Activated CD8-positive, alpha-beta T cell treated with anti-CD3 and anti-CD28 coated beads for 36 hours (primary cell): ENCODE measurements at regions of chr2 and their contacts with region 1.

Region 1: DNA sequence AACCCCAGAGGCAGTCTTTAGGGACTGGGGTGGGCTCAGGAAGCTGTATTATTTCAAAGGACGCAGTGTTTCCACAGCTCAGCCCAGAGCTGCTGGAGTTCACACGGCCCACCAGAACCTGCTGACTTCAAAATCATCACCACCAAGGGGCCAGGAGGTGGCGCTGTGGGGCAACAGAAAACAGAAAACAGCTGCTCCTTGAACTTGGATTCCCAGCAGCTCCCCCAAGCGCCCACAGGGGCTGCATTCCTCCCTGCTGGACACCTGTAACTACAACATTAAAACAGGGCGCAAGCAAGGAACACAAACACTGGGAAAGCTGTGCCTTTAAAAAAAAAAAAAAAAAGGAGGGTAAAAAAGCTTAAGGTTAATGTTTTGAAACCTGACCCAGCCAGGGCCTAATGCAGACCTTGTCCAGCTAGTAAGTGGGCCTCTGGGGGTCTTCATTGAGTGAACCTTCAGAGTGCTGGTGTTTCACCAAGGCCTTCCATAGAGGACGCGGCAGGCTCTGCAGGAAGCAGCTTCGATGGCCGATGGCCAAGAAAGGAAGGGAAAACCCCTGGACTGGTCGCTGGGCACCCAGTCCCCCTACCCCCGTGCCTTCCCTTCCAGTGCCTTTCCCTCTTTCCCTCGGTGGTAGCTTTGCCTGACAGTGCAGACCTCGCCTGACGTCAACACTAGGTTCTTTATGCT is 25.9 kb downstream of the MLPH start:
- DNase-seq: peak; percentile 91
- ATAC-seq: peak; percentile 91
- H3K4me3 Mint-ChIP-seq: no peak overlapping the region
- H3K27ac Mint-ChIP-seq: no peak overlapping the region
- H3K4me1 Mint-ChIP-seq: no peaks in the 10 kb centered on the region
- H3K27me3 Mint-ChIP-seq: no peaks in the 10 kb centered on the region
- CTCF ChIP-seq: peak; percentile 95

Region 2: GRCh38 chr2:237154082-237154638 is 358.8 kb before region 1 on chr2:
- CTCF ChIA-PET with region 1: interaction called, 19 read pairs
- POLR2A ChIA-PET with region 1: no interaction called
- intact Hi-C with region 1: no loop called
- DNase-seq: peak; percentile 71
- ATAC-seq: peak; percentile 29
- H3K4me3 Mint-ChIP-seq: no peak overlapping the region
- H3K27ac Mint-ChIP-seq: peak overlapping the region; percentile 86
- H3K4me1 Mint-ChIP-seq: peaks cover 52% of the 10 kb centered on the region
- H3K27me3 Mint-ChIP-seq: no peaks in the 10 kb centered on the region
- CTCF ChIP-seq: peak; percentile 81

Region 3: DNA sequence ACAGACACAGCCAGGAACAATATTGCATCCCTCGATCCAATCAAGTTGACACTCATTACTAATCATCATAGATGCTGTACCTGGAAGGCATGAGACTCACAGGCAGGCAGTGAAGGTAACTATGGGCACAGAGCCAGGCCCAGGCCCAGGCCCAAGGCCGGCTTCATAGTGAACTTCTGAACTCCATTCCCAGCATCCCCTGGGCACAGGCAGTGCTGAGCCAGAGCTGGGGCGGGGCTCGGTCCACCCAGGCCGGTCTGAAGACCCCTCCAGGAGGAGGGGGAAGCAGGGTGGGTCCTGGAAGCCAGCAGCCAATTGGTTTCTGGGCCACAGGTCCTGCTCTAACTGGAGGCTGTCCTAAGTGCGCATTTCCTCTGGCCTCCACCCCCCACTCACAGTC is 11.7 kb after region 1 on chr2:
- CTCF ChIA-PET with region 1: interaction called, 15 read pairs
- POLR2A ChIA-PET with region 1: interaction called, 3 read pairs
- intact Hi-C with region 1: no loop called
- DNase-seq: no peak
- ATAC-seq: no peak
- H3K4me3 Mint-ChIP-seq: no peak overlapping the region
- H3K27ac Mint-ChIP-seq: no peak overlapping the region
- H3K4me1 Mint-ChIP-seq: no peaks in the 10 kb centered on the region
- H3K27me3 Mint-ChIP-seq: no peaks in the 10 kb centered on the region
- CTCF ChIP-seq: no peak

Region 4: GRCh38 chr2:237540223-237540775 is 27.4 kb after region 1 on chr2:
- CTCF ChIA-PET with region 1: interaction called, 14 read pairs
- POLR2A ChIA-PET with region 1: no interaction called
- intact Hi-C with region 1: no loop called
- DNase-seq: no peak
- ATAC-seq: no peak
- H3K4me3 Mint-ChIP-seq: no peak overlapping the region
- H3K27ac Mint-ChIP-seq: no peak overlapping the region
- H3K4me1 Mint-ChIP-seq: no peaks in the 10 kb centered on the region
- H3K27me3 Mint-ChIP-seq: no peaks in the 10 kb centered on the region
- CTCF ChIP-seq: no peak

Region 5: GRCh38 chr2:237563816-237564215 is 50.9 kb after region 1 on chr2:
- CTCF ChIA-PET with region 1: interaction called, 13 read pairs
- POLR2A ChIA-PET with region 1: no interaction called
- intact Hi-C with region 1: no loop called
- DNase-seq: no peak
- ATAC-seq: no peak
- H3K4me3 Mint-ChIP-seq: no peak overlapping the region
- H3K27ac Mint-ChIP-seq: no peak overlapping the region
- H3K4me1 Mint-ChIP-seq: no peaks in the 10 kb centered on the region
- H3K27me3 Mint-ChIP-seq: peaks cover 10% of the 10 kb centered on the region
- CTCF ChIP-seq: no peak

Region 6: GRCh38 chr2:237581751-237582746 is 69.1 kb after region 1 on chr2:
- CTCF ChIA-PET with region 1: interaction called, 285 read pairs
- POLR2A ChIA-PET with region 1: no interaction called
- intact Hi-C with region 1: no loop called
- DNase-seq: peak; percentile 89
- ATAC-seq: peak; percentile 98
- H3K4me3 Mint-ChIP-seq: no peak overlapping the region
- H3K27ac Mint-ChIP-seq: peak overlapping the region; percentile 79
- H3K4me1 Mint-ChIP-seq: peaks cover 8% of the 10 kb centered on the region
- H3K27me3 Mint-ChIP-seq: no peaks in the 10 kb centered on the region
- CTCF ChIP-seq: peak; percentile 67